ENCODE measurements at regions of chr17 and their contacts with region 1.

Region 1: DNA sequence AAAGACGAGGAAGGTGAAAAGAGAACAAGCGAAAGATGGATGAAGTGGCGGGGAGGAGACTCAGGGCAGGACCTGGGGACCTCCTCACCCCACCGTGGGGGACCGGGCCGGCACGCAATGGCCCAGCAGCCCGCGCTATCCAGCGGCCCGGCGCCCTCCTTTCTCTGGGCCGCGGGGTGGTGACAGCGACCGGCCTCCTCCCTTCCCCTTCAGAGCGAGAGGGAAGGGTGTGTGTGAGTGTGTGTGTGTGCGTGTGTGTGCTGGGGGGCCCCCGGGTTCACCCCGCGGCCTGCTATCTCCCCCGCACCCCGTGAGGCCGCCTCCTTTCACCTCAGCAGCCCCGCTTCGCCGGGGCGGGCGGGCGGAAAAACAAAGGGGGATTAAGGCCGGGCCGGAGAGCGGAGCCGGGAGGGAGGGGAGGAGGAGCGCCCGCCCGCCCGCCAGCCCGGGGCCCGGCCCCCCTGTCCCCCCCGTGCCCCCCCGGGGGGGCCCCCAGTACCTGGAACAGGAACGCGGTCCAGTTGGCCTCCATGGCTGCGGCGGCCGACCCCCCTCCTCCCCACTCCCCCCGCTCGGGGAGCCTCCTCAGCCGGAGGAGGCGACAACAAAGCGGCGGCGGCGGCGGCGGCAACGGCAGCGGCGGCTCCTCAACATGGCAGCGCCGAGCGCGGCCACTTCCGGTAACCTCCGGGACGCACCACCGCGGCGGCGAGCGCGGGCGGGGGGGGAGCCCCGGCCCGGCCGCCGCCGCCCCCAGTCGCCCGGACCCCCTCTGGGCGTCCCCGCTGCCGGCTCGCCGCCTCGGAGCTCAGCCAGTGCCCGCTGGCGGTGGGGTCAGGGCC is at the start of gene VEZF1:
- H3K4me3 Mint-ChIP-seq: peak within 1 kb of the TSS; percentile 96
- H3K27ac Mint-ChIP-seq: peak within 1 kb of the TSS; percentile 97
- H3K4me1 Mint-ChIP-seq: peaks cover 48% of the 10 kb centered on the region
- H3K27me3 Mint-ChIP-seq: no peaks in the 10 kb centered on the region

Region 2: DNA sequence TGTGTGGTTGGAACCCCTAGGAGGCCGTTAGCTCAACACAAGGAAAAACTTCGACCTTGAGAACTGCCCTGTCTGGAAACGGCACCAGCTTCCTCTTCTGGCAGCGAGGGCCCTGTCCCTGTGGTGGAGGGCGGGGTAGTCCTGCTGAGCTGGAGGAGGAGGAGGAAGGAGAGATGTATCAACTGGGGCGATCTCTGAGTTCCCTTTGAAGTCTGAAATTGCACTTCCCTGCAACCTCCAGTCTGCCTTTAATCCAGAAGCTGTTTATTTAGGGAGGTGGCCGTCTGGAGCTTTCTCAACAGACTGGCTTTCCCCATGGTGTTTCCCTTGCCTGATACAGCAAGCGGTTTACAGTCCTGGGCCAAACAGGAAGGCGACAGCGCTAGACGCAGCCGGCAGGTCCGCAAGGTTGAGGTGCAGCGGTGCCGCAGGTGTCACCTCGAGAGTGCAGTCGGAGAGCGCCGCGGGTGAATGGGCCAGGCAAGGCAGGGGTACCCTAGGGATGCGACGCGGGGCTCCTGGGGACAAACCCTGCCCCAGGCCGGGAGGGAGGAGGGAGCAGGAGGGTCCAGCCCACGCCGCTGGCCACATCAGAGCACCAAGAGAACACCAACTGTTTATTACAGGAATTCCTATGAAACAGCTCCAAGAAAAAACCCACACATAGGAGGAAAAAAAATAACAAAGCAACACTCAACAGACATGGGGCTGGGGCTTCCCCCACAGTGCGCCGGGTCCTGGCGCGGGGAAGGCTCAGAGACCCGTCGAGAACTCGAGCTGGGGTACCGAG is 126.6 kb before region 1 on chr17:
- intact Hi-C with region 1: loop called (anchors 5 kb)
- H3K4me3 Mint-ChIP-seq: peak overlapping the region; percentile 84
- H3K27ac Mint-ChIP-seq: peak overlapping the region; percentile 97
- H3K4me1 Mint-ChIP-seq: peaks cover 44% of the 10 kb centered on the region
- H3K27me3 Mint-ChIP-seq: peaks cover 25% of the 10 kb centered on the region

Region 3: DNA sequence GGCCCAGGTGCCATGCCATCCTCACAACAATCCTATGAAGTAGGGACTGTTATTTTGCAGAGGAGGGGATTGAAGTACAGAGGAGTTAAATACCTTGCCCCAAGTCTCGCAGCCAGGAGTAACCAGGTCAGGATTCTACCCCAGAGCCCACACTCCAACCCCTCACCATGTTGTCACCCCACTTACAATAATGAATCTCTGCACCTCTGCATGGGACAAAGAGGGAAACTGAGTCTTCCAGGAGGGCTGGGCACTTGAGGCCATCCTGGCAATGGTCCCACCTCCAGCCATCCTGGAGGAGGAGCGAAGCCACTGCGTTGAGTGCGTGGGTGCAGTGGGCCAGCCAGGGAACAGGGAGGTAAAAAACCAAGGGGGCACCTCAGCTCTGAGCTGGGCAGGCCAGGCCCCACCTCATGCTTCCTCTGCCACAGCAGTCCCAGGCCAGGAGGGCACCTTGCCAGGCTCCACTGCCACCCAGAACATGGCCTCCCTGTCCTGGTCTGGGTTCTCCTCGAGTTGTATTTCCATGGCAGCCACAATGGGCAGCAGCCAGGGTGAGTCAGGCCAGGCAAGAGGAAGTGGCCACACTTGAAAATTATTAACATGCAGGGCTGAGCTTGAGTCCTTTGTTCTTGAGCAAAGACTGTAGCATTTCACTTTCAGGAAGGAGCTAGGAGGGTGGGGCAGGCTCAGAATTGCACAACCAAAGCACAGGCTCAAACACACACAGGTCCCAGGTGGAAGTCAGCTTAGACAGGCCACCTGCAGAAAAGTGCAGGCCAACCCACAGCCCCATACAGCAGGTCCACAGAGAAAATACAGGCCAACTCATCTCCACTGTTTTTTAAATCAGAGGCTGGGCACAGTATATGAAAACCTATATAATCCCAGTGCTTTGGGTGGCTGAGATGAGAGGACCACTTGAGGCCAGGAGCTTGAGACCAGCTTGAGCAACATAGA is 84.7 kb before region 1 on chr17:
- intact Hi-C with region 1: loop called (anchors 2 kb)
- H3K4me3 Mint-ChIP-seq: peak overlapping the region; percentile 13
- H3K27ac Mint-ChIP-seq: peak overlapping the region; percentile 97
- H3K4me1 Mint-ChIP-seq: peaks cover 90% of the 10 kb centered on the region
- H3K27me3 Mint-ChIP-seq: no peaks in the 10 kb centered on the region

Region 4: GRCh38 chr17:57927048-57927723 is 60.6 kb before region 1 on chr17:
- intact Hi-C with region 1: no loop called
- H3K4me3 Mint-ChIP-seq: no peak overlapping the region
- H3K27ac Mint-ChIP-seq: peak overlapping the region; percentile 39
- H3K4me1 Mint-ChIP-seq: peaks cover 47% of the 10 kb centered on the region
- H3K27me3 Mint-ChIP-seq: peaks cover 7% of the 10 kb centered on the region

Region 5: GRCh38 chr17:57946798-57947358 is 40.9 kb before region 1 on chr17:
- intact Hi-C with region 1: loop called (anchors 2 kb)
- H3K4me3 Mint-ChIP-seq: peak overlapping the region; percentile 77
- H3K27ac Mint-ChIP-seq: peak overlapping the region; percentile 87
- H3K4me1 Mint-ChIP-seq: peaks cover 75% of the 10 kb centered on the region
- H3K27me3 Mint-ChIP-seq: no peaks in the 10 kb centered on the region